ENCODE measurements at regions of chr20 and their contacts with region 1.

Region 1: GRCh38 chr20:46681032-46681854 is 8.0 kb downstream of the TP53RK start:
- DNase-seq: peak; percentile 33 to 73 (median 60)
- ATAC-seq: no peak
- H3K4me3 ChIP-seq: no peak overlapping the region
- H3K27ac ChIP-seq: no peak overlapping the region
- H3K4me1 ChIP-seq: peaks cover 6% of the 10 kb centered on the region
- H3K27me3 ChIP-seq: no peaks in the 10 kb centered on the region

Region 2: DNA sequence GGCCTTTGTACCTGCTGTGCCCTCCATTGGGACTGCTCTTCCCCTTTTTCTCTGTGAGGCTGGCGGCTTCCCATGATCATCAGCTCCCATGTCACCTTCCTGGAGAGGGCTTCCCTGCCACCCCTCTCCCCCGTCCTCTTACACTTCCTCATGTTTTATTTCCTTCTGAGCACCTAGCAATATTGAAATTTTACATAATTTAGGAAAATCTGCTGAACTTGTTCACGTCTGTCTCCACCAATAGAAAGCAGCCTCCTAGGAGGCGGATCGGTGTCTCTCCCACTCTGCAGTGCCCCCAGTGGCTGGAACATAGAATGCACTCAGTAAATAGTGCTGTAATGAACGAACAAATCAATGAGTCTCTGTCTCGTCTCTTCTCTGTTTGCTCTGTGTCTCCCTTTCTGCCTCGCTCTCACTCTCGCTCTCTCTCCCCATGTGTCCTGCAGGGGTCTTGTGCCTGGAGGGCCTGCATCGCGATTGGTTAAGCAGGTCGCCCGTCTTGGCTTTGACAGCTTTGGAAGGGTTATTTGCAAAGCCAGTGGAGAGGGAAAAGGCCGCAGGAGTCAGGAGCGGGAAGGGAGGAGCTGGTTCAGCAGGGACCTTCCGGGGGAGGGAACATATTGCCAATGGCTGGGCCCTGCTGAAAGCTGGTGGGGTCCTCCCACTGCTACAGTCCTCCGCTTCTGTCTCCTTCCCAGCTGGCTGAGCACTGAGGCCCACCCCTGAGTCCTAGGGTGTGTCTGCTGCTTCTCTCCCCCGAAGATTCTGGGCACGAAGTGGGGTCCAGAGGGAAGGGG is 118.7 kb before region 1 on chr20:
- intact Hi-C with region 1: loop called in 3 of 4 experiments (anchors 2 to 10 kb)
- DNase-seq: peak; percentile 61 to 87 (median 82)
- ATAC-seq: peak; percentile 85 to 88
- H3K4me3 ChIP-seq: peak overlapping the region; percentile 42
- H3K27ac ChIP-seq: peak overlapping the region; percentile 63
- H3K4me1 ChIP-seq: peaks cover 3% of the 10 kb centered on the region
- H3K27me3 ChIP-seq: no peaks in the 10 kb centered on the region

Region 3: GRCh38 chr20:46572153-46572552 is 109.1 kb before region 1 on chr20:
- intact Hi-C with region 1: loop called in 1 of 4 experiments (anchors 5 kb)
- DNase-seq: peak; percentile 40 to 85 (median 76)
- ATAC-seq: peak; percentile 52 to 67
- H3K4me3 ChIP-seq: no peak overlapping the region
- H3K27ac ChIP-seq: no peak overlapping the region
- H3K4me1 ChIP-seq: peaks cover 7% of the 10 kb centered on the region
- H3K27me3 ChIP-seq: no peaks in the 10 kb centered on the region